AG04450 (cell line): ENCODE measurements at regions of chr13 and their contacts with region 1.

Region 1: DNA sequence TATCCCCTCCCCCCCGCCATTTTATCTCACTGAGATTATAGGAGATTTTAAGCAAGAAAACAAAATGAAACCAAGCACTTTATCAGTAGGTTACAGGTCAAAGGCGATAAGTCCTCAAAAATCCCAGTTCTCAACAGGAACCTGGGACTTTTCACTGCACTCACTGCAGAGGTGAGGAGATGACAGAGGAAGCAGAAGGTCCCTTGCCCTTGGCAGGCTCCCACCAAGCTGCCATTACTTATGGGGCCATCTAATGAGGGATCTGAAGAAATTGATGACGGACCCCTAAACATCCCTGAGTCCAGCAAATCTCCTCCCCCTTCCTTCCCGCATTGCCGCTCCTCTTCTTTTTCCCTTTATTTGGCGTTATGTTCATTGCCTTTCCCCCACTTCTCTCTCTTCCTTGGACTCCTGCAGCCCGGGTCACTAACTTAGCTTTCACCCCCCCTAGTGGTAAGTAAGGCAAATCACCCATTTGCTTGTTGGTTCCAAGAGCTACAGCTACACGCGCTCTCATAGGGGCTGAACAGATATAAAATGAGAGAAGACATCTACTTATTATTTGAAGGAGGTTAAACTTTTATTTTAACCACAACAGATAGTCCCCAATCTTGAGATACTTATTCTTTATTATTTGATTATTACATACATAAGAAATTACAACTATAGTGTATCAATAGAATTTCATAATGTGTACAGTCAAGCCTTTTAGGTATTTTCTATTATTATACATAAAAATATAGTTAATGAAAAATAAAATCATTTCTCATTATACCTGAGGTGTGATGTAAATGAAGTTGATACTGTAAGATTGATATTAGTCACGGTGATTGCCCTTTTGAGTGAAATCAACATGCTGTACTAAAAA is 52.0 kb upstream of the ARGLU1 start:
- DNase-seq: peak; percentile 32
- H3K4me3 ChIP-seq: no peak overlapping the region
- H3K27ac ChIP-seq: no peak overlapping the region
- H3K27me3 ChIP-seq: peaks cover 29% of the 10 kb centered on the region
- CTCF ChIP-seq: peak; percentile 94

Region 2: GRCh38 chr13:106418556-106418955 is 201.4 kb before region 1 on chr13:
- CTCF ChIA-PET with region 1: no interaction called
- POLR2A ChIA-PET with region 1: no interaction called
- DNase-seq: peak; percentile 46
- H3K4me3 ChIP-seq: no peak overlapping the region
- H3K27ac ChIP-seq: no peak overlapping the region
- H3K27me3 ChIP-seq: peaks cover 2% of the 10 kb centered on the region
- CTCF ChIP-seq: no peak

Region 3: GRCh38 chr13:106603546-106603945 is 16.4 kb before region 1 on chr13:
- CTCF ChIA-PET with region 1: interaction called, 14 read pairs
- POLR2A ChIA-PET with region 1: no interaction called
- DNase-seq: no peak
- H3K4me3 ChIP-seq: no peak overlapping the region
- H3K27ac ChIP-seq: no peak overlapping the region
- H3K27me3 ChIP-seq: peaks cover 2% of the 10 kb centered on the region
- CTCF ChIP-seq: no peak

Region 4: GRCh38 chr13:106630650-106631049 is 10.7 kb after region 1 on chr13:
- CTCF ChIA-PET with region 1: interaction called, 32 read pairs
- POLR2A ChIA-PET with region 1: no interaction called
- DNase-seq: no peak
- H3K4me3 ChIP-seq: no peak overlapping the region
- H3K27ac ChIP-seq: no peak overlapping the region
- H3K27me3 ChIP-seq: peaks cover 2% of the 10 kb centered on the region
- CTCF ChIP-seq: no peak